Natural killer cell (primary cell): ENCODE measurements at regions of chr15 and their contacts with region 1.

Region 1: GRCh38 chr15:56491110-56491722 is 26.3 kb upstream of the MNS1 start:
- DNase-seq: peak in 1 of 2 donors; percentile 73
- ATAC-seq: peak in 2 of 3 donors; percentile 47 to 66
- H3K4me3 ChIP-seq: no peak overlapping the region
- H3K4me3 Mint-ChIP-seq: no peak overlapping the region
- H3K27ac ChIP-seq: no peak overlapping the region
- H3K27ac Mint-ChIP-seq: no peak overlapping the region
- H3K4me1 ChIP-seq: no peaks in the 10 kb centered on the region
- H3K4me1 Mint-ChIP-seq: no peaks in the 10 kb centered on the region
- H3K27me3 ChIP-seq: no peaks in the 10 kb centered on the region
- H3K27me3 Mint-ChIP-seq: peaks cover 6 to 8% of the 10 kb centered on the region in 2 donors
- CTCF ChIP-seq: peak; percentile 69

Region 2: GRCh38 chr15:55685286-55685685 is 805.9 kb before region 1 on chr15:
- intact Hi-C with region 1: no loop called
- DNase-seq: peak in 1 of 2 donors; percentile 4
- ATAC-seq: no peak
- H3K4me3 ChIP-seq: no peak overlapping the region
- H3K4me3 Mint-ChIP-seq: no peak overlapping the region
- H3K27ac ChIP-seq: no peak overlapping the region
- H3K27ac Mint-ChIP-seq: no peak overlapping the region
- H3K4me1 ChIP-seq: no peaks in the 10 kb centered on the region
- H3K4me1 Mint-ChIP-seq: no peaks in the 10 kb centered on the region
- H3K27me3 ChIP-seq: no peaks in the 10 kb centered on the region
- H3K27me3 Mint-ChIP-seq: peaks cover 13 to 16% of the 10 kb centered on the region in 2 donors
- CTCF ChIP-seq: no peak

Region 3: GRCh38 chr15:56460071-56460470 is 31.1 kb before region 1 on chr15:
- intact Hi-C with region 1: no loop called
- DNase-seq: no peak
- ATAC-seq: no peak
- H3K4me3 ChIP-seq: no peak overlapping the region
- H3K4me3 Mint-ChIP-seq: no peak overlapping the region
- H3K27ac ChIP-seq: no peak overlapping the region
- H3K27ac Mint-ChIP-seq: no peak overlapping the region
- H3K4me1 ChIP-seq: peaks cover 7% of the 10 kb centered on the region
- H3K4me1 Mint-ChIP-seq: peaks cover 8 to 9% of the 10 kb centered on the region in 2 donors
- H3K27me3 ChIP-seq: no peaks in the 10 kb centered on the region
- H3K27me3 Mint-ChIP-seq: peaks cover 8 to 13% of the 10 kb centered on the region in 2 donors
- CTCF ChIP-seq: no peak

Region 4: DNA sequence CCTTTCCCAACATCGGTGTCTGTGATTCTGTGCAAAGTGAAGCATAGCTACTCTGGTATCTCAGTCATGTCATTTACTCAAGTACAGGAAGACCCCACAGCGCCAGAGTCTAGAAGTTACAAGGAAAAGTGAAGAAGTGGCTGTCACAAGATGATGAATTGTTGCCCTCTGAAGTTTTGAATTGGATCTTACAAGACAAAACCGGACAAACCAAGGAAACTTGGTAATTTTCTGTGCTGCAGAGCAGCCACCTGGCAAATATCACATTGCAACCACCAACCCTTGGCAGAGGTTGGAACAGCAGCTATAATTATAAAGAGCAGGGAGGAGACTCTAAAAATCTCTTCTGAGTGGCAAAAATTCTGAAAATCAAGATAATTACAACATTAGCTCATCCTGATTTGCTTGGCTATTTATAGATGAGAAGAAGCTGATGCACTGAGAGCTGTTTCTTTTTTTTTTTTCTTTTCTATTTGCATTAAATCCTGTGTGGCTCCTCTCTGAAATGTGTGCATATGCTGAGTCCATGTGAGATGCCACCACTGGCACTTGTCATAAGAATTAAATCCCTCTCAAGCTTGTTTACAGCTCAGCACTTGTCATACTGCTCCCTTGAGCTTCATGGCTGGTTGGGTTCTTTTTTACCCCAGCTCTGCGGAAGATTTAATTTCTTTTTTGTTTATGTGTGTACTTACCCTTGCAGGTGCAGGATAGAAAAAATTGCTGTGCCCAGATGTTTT is 41.7 kb after region 1 on chr15:
- intact Hi-C with region 1: no loop called
- DNase-seq: no peak
- ATAC-seq: no peak
- H3K4me3 ChIP-seq: no peak overlapping the region
- H3K4me3 Mint-ChIP-seq: no peak overlapping the region
- H3K27ac ChIP-seq: no peak overlapping the region
- H3K27ac Mint-ChIP-seq: no peak overlapping the region
- H3K4me1 ChIP-seq: peaks cover 7% of the 10 kb centered on the region
- H3K4me1 Mint-ChIP-seq: peaks cover 7 to 13% of the 10 kb centered on the region in 2 donors
- H3K27me3 ChIP-seq: no peaks in the 10 kb centered on the region
- H3K27me3 Mint-ChIP-seq: peaks cover 13 to 67% of the 10 kb centered on the region in 2 donors
- CTCF ChIP-seq: no peak

Region 5: GRCh38 chr15:56869573-56869972 is 378.4 kb after region 1 on chr15:
- intact Hi-C with region 1: loop called (anchors 10 kb)
- DNase-seq: peak in 1 of 2 donors; percentile 26
- ATAC-seq: no peak
- H3K4me3 ChIP-seq: no peak overlapping the region
- H3K4me3 Mint-ChIP-seq: no peak overlapping the region
- H3K27ac ChIP-seq: no peak overlapping the region
- H3K27ac Mint-ChIP-seq: no peak overlapping the region
- H3K4me1 ChIP-seq: no peaks in the 10 kb centered on the region
- H3K4me1 Mint-ChIP-seq: no peaks in the 10 kb centered on the region
- H3K27me3 ChIP-seq: no peaks in the 10 kb centered on the region
- H3K27me3 Mint-ChIP-seq: no peaks in the 10 kb centered on the region
- CTCF ChIP-seq: no peak